CD4-positive, alpha-beta memory T cell (primary cell): ENCODE measurements at regions of chr2 and their contacts with region 1.

Region 1: DNA sequence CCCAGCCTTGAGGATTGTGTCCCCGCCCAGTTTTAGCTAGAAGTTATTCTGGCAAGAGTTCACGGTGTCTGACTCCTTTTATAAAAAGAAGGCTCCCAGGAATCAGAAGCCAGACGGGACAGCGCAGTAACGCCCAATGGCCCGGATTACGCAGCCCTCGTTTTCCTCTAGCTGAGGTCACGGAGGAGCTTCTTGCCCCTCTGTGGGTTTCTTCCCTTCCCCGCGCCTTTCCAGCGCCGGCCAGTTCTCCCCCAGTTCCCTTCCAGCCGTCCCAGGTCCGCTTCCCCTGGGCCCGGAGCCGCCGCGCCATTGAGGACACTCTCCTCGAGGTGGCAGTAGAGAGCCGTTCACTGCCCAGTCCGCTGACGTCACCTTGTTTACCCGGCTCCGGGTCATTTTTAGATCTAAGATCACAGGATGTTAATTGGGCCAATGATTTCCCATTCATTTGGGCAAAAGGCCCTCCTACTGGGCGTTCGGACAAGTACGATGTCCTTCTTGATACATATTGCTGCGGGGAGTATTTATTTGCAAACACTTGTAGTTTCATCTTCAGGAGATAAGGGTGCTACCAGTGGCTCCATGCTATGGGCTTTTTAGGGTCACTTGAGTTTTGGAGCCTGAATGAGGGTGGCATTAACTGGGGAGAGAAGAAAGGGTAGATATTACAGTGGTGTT is 81.5 kb upstream of the PPM1B start:
- DNase-seq: peak; percentile 76 to 81 (median 78)
- H3K4me3 ChIP-seq: peak overlapping the region; percentile 57 to 86
- H3K4me3 Mint-ChIP-seq: peak overlapping the region; percentile 84 to 91 (median 88)
- H3K27ac ChIP-seq: peak overlapping the region; percentile 23
- H3K27ac Mint-ChIP-seq: peak overlapping the region; percentile 51 to 97 (median 95)
- H3K4me1 ChIP-seq: peaks cover 10% of the 10 kb centered on the region
- H3K4me1 Mint-ChIP-seq: peaks cover 5 to 13% (median 7%) of the 10 kb centered on the region in 4 donors
- H3K27me3 ChIP-seq: no peaks in the 10 kb centered on the region
- H3K27me3 Mint-ChIP-seq: no peaks in the 10 kb centered on the region

Region 2: GRCh38 chr2:43985359-43985758 is 101.8 kb before region 1 on chr2:
- CTCF ChIA-PET with region 1: no interaction called
- POLR2A ChIA-PET with region 1: no interaction called
- intact Hi-C with region 1: no loop called
- DNase-seq: no peak
- H3K4me3 ChIP-seq: no peak overlapping the region
- H3K4me3 Mint-ChIP-seq: peak overlapping the region in 1 of 8 donors; percentile 0
- H3K27ac ChIP-seq: no peak overlapping the region
- H3K27ac Mint-ChIP-seq: no peak overlapping the region
- H3K4me1 ChIP-seq: peaks cover 6% of the 10 kb centered on the region
- H3K4me1 Mint-ChIP-seq: peaks cover 19 to 38% (median 29%) of the 10 kb centered on the region in 4 donors
- H3K27me3 ChIP-seq: no peaks in the 10 kb centered on the region
- H3K27me3 Mint-ChIP-seq: no peaks in the 10 kb centered on the region

Region 3: DNA sequence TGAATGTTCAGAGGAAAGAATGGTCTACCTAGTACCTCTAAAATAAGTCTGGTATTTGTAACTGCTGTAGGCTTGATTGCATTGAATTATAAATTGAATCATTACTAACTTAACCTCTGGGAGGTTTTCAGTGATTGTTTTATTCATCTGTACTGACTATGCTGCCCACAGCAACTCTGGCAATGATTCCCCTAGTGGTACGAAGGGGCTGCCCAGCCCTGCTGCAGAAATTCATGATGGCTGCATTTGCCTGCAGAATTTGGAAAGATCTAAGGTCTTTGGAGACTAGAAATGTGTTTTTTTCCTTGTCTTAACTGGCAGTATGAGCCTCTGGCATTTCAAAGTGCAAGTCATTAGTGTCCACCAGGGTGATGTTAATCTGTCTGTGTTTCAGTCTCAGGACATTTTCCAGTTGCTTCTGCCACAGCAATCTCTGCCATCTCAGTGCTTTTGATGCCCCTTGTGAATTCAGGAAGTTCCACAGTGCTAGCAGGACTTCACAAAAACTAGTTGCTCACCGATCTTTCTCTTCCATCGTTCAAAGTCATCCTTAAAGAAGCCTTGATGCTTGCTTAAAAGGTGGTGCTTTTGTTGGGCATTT is 77.9 kb before region 1 on chr2:
- CTCF ChIA-PET with region 1: no interaction called
- POLR2A ChIA-PET with region 1: no interaction called
- intact Hi-C with region 1: no loop called
- DNase-seq: no peak
- H3K4me3 ChIP-seq: no peak overlapping the region
- H3K4me3 Mint-ChIP-seq: no peak overlapping the region
- H3K27ac ChIP-seq: no peak overlapping the region
- H3K27ac Mint-ChIP-seq: peak overlapping the region in 1 of 7 donors; percentile 5
- H3K4me1 ChIP-seq: peaks cover 11% of the 10 kb centered on the region
- H3K4me1 Mint-ChIP-seq: peaks cover 7 to 17% (median 12%) of the 10 kb centered on the region in 4 donors
- H3K27me3 ChIP-seq: no peaks in the 10 kb centered on the region
- H3K27me3 Mint-ChIP-seq: peaks cover 5 to 6% of the 10 kb centered on the region in 2 donors

Region 4: GRCh38 chr2:44044281-44044720 is 42.9 kb before region 1 on chr2:
- CTCF ChIA-PET with region 1: interaction called, 5 read pairs
- POLR2A ChIA-PET with region 1: no interaction called
- intact Hi-C with region 1: loop called (anchors 1 kb)
- DNase-seq: peak; percentile 60 to 68 (median 66)
- H3K4me3 ChIP-seq: no peak overlapping the region
- H3K4me3 Mint-ChIP-seq: peak overlapping the region in 1 of 8 donors; percentile 38
- H3K27ac ChIP-seq: no peak overlapping the region
- H3K27ac Mint-ChIP-seq: peak overlapping the region in 1 of 7 donors; percentile 14
- H3K4me1 ChIP-seq: peaks cover 6% of the 10 kb centered on the region
- H3K4me1 Mint-ChIP-seq: peaks cover 0 to 4% (median 2%) of the 10 kb centered on the region in 4 donors
- H3K27me3 ChIP-seq: no peaks in the 10 kb centered on the region
- H3K27me3 Mint-ChIP-seq: peaks cover 0 to 2% of the 10 kb centered on the region in 2 donors

Region 5: GRCh38 chr2:44120428-44120827 is 33.3 kb after region 1 on chr2:
- CTCF ChIA-PET with region 1: interaction called, 3 read pairs
- POLR2A ChIA-PET with region 1: no interaction called
- intact Hi-C with region 1: loop called (anchors 1 kb)
- DNase-seq: peak; percentile 33 to 73 (median 46)
- H3K4me3 ChIP-seq: no peak overlapping the region
- H3K4me3 Mint-ChIP-seq: peak overlapping the region in 4 of 8 donors; percentile 43 to 74 (median 56)
- H3K27ac ChIP-seq: no peak overlapping the region
- H3K27ac Mint-ChIP-seq: peak overlapping the region in 2 of 7 donors; percentile 44 to 66
- H3K4me1 ChIP-seq: peaks cover 12% of the 10 kb centered on the region
- H3K4me1 Mint-ChIP-seq: peaks cover 8 to 28% (median 16%) of the 10 kb centered on the region in 4 donors
- H3K27me3 ChIP-seq: no peaks in the 10 kb centered on the region
- H3K27me3 Mint-ChIP-seq: peaks cover 0 to 4% of the 10 kb centered on the region in 2 donors

Region 6: DNA sequence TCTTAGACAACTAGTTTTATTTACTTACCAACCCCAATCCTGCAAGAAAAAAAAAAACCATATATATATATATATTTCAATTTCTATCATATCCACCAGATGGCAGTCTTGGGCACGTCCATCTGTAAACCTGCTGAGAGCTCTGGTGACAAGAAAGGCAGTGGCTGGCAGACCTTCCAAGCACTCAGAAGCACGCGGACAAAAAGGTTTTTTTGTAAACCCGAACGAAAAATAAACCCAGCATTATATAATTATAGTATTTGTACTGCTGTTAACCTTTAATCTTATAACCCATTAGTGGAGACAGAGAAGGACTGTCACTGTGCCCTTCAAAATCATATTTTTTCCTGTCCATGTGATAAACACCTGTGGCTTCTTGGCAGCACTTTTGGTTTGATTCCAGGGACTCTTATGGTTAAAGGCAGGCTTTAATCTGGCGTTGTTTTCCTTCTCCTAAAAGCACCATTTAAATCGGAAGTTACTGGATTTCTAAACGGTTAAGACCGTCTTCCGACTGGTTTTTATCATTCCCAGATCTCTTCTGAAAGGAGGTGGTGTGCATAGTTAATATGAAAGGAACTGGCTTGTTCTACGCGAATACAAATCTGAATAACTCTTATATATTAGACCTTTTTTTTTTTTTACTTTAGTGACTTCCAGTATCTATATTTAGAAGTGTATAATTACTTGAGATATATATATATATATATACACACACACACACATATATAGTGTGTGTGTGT is 157.1 kb after region 1 on chr2:
- CTCF ChIA-PET with region 1: interaction called, 5 read pairs
- POLR2A ChIA-PET with region 1: no interaction called
- intact Hi-C with region 1: loop called (anchors 1 kb)
- DNase-seq: peak; percentile 46 to 68 (median 66)
- H3K4me3 ChIP-seq: peak overlapping the region in 1 of 2 donors; percentile 58
- H3K4me3 Mint-ChIP-seq: peak overlapping the region; percentile 83 to 93 (median 86)
- H3K27ac ChIP-seq: no peak overlapping the region
- H3K27ac Mint-ChIP-seq: peak overlapping the region in 5 of 7 donors; percentile 58 to 88 (median 71)
- H3K4me1 ChIP-seq: peaks cover 10% of the 10 kb centered on the region
- H3K4me1 Mint-ChIP-seq: peaks cover 13 to 30% (median 23%) of the 10 kb centered on the region in 4 donors
- H3K27me3 ChIP-seq: no peaks in the 10 kb centered on the region
- H3K27me3 Mint-ChIP-seq: no peaks in the 10 kb centered on the region

Region 7: DNA sequence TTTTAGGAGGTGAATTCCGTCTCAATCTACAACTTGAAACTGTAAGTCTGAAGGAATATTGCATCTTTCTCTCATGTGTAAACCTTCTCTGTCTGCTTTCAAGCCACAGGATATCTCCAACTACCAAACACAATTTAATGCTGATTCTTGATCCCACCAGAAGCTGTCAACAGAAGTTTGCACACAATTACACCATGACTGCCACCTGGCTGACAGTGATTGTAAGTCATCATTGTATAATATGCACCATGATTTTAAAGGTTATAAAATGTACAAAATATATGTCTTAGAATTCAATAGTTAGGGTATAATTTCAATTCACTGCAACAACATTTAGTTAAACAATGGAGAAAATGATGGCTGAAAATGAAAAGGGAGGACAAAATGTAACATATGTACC is 255.7 kb after region 1 on chr2:
- CTCF ChIA-PET with region 1: interaction called, 16 read pairs
- POLR2A ChIA-PET with region 1: no interaction called
- intact Hi-C with region 1: loop called (anchors 1 kb)
- DNase-seq: peak in 4 of 5 donors; percentile 14 to 29 (median 22)
- H3K4me3 ChIP-seq: no peak overlapping the region
- H3K4me3 Mint-ChIP-seq: no peak overlapping the region
- H3K27ac ChIP-seq: no peak overlapping the region
- H3K27ac Mint-ChIP-seq: no peak overlapping the region
- H3K4me1 ChIP-seq: no peaks in the 10 kb centered on the region
- H3K4me1 Mint-ChIP-seq: peaks cover 0 to 2% (median under 1%) of the 10 kb centered on the region in 4 donors
- H3K27me3 ChIP-seq: no peaks in the 10 kb centered on the region
- H3K27me3 Mint-ChIP-seq: no peaks in the 10 kb centered on the region

Region 8: DNA sequence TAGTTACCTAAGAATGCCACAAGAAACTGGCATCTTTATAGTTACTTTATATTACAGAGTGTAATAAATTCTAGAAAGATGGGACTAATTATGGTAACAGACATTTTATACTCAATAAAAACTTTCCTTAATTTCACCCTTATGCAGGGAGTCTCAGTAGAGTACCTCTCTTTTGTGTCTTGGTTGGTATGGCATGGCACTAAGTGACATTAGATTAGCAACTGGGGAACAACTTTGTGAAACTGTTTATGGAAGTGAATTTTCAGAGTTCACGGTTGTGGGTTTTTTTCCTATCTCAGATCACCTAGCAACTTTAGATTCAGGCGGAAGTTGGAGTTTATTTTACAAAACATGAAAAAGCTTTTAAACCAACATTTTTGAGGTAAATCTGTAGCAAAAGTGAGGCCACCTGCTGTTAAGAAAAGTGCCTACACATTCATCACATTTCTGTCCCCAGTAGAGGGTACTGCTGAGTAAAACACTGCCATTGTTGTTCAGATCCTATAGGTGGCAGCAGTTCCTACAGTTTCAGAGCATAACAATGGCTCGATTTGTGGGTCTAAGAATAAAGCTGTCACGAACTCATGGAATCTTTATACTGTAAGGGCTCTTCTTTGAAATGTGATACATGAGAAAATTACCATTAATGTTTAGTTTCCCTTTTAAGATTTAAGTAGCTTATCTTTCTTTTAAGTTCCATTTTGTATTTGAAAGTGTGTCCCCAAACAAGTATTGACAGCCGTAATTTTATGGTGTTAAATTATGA is 392.1 kb after region 1 on chr2:
- CTCF ChIA-PET with region 1: interaction called, 13 read pairs
- POLR2A ChIA-PET with region 1: no interaction called
- intact Hi-C with region 1: loop called (anchors 1 kb)
- DNase-seq: peak; percentile 49 to 73 (median 64)
- H3K4me3 ChIP-seq: no peak overlapping the region
- H3K4me3 Mint-ChIP-seq: no peak overlapping the region
- H3K27ac ChIP-seq: no peak overlapping the region
- H3K27ac Mint-ChIP-seq: peak overlapping the region in 1 of 7 donors; percentile 8
- H3K4me1 ChIP-seq: no peaks in the 10 kb centered on the region
- H3K4me1 Mint-ChIP-seq: peaks cover 4 to 8% (median 6%) of the 10 kb centered on the region in 4 donors
- H3K27me3 ChIP-seq: no peaks in the 10 kb centered on the region
- H3K27me3 Mint-ChIP-seq: no peaks in the 10 kb centered on the region

Region 9: GRCh38 chr2:45289997-45290709 is 1203.0 kb after region 1 on chr2:
- CTCF ChIA-PET with region 1: no interaction called
- POLR2A ChIA-PET with region 1: no interaction called
- intact Hi-C with region 1: no loop called
- DNase-seq: no peak
- H3K4me3 ChIP-seq: no peak overlapping the region
- H3K4me3 Mint-ChIP-seq: no peak overlapping the region
- H3K27ac ChIP-seq: no peak overlapping the region
- H3K27ac Mint-ChIP-seq: no peak overlapping the region
- H3K4me1 ChIP-seq: no peaks in the 10 kb centered on the region
- H3K4me1 Mint-ChIP-seq: no peaks in the 10 kb centered on the region
- H3K27me3 ChIP-seq: no peaks in the 10 kb centered on the region
- H3K27me3 Mint-ChIP-seq: peaks cover 6 to 17% of the 10 kb centered on the region in 2 donors